Activated CD4-positive, alpha-beta T cell treated with anti-CD3 and anti-CD28 coated beads for 36 hours (primary cell): ENCODE measurements at regions of chr3 and their contacts with region 1.

Region 1: DNA sequence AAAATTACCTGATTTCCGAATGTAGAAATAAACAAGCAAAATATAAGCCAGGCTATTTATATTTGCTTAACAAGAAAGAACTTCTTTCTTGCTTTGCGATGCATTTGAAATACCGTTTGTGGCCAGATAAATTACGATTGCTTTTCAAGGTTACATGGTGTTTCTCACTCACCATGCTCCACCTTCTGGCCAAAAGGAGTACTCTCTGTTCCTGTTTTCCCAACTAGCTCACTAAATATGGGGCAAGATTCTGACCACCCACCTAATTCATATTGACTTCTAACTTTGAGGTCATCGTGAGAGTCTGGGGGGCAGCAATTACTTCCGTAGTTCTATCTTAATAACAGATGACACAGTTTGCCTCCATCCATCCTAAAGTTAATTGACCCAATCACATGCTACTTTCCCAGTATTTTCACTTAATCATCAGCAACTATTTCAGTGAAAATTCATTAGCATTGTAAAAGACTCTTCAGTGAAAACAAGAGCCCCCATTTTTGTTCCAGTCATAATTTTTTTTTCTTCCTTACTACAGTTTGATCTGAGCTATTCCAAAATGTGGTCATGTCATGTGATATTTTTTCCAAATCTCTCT is 25.9 kb downstream of the ACP3 start:
- DNase-seq: peak; percentile 25
- ATAC-seq: no peak
- H3K4me3 Mint-ChIP-seq: no peak overlapping the region
- H3K27ac Mint-ChIP-seq: no peak overlapping the region
- H3K4me1 Mint-ChIP-seq: peaks cover 2% of the 10 kb centered on the region
- H3K27me3 Mint-ChIP-seq: peaks cover 4% of the 10 kb centered on the region

Region 2: GRCh38 chr3:132022914-132023313 is 320.2 kb before region 1 on chr3:
- CTCF ChIA-PET with region 1: no interaction called
- POLR2A ChIA-PET with region 1: no interaction called
- intact Hi-C with region 1: no loop called
- DNase-seq: no peak
- ATAC-seq: no peak
- H3K4me3 Mint-ChIP-seq: no peak overlapping the region
- H3K27ac Mint-ChIP-seq: no peak overlapping the region
- H3K4me1 Mint-ChIP-seq: no peaks in the 10 kb centered on the region
- H3K27me3 Mint-ChIP-seq: peaks cover 14% of the 10 kb centered on the region

Region 3: GRCh38 chr3:132034486-132035464 is 308.3 kb before region 1 on chr3 and contains the start of gene CPNE4:
- CTCF ChIA-PET with region 1: interaction called, 3 read pairs
- POLR2A ChIA-PET with region 1: no interaction called
- intact Hi-C with region 1: loop called in 1 of 2 experiments (anchors 5 kb)
- DNase-seq: peak; percentile 91
- ATAC-seq: peak; percentile 97
- H3K4me3 Mint-ChIP-seq: peak within 1 kb of the TSS; percentile 33
- H3K27ac Mint-ChIP-seq: no peak within 1 kb of the TSS
- H3K4me1 Mint-ChIP-seq: peaks cover 12% of the 10 kb centered on the region
- H3K27me3 Mint-ChIP-seq: peaks cover 62% of the 10 kb centered on the region
- total RNA-seq, gene CPNE4: not detected

Region 4: DNA sequence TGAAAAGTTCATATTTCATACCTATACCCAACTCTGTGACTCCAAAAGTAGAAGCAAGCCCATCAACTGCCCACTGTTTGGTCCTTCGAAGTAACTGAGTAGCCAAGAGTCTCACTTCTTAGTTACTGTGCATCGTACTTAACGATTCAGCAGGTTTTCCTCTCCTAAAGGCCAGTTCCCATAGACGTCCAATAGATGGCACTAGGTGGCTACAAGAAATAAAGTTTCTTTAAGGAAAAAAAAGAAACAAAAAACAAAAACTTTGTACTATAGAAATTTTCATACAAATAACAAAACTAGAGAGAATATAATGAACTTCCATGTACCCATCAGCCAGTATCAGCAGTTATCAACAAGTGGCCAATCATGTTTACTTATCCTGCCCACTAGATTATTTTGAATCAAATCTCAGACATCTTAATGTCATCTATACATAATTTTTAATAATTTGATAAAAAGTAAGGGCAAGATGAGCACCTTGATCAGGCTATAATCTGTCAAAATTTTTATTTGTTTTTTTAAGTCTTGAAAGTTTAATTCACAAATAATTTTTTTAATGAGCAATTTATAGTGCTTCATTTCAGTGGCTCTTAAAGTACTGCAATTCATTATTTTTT is 89.7 kb before region 1 on chr3:
- CTCF ChIA-PET with region 1: interaction called, 17 read pairs
- POLR2A ChIA-PET with region 1: no interaction called
- intact Hi-C with region 1: loop called (anchors 1 kb)
- DNase-seq: peak; percentile 13
- ATAC-seq: peak; percentile 44
- H3K4me3 Mint-ChIP-seq: no peak overlapping the region
- H3K27ac Mint-ChIP-seq: no peak overlapping the region
- H3K4me1 Mint-ChIP-seq: no peaks in the 10 kb centered on the region
- H3K27me3 Mint-ChIP-seq: peaks cover 7% of the 10 kb centered on the region

Region 5: GRCh38 chr3:132332508-132332907 is 10.6 kb before region 1 on chr3:
- CTCF ChIA-PET with region 1: interaction called, 15 read pairs
- POLR2A ChIA-PET with region 1: no interaction called
- intact Hi-C with region 1: no loop called
- DNase-seq: no peak
- ATAC-seq: no peak
- H3K4me3 Mint-ChIP-seq: no peak overlapping the region
- H3K27ac Mint-ChIP-seq: no peak overlapping the region
- H3K4me1 Mint-ChIP-seq: no peaks in the 10 kb centered on the region
- H3K27me3 Mint-ChIP-seq: peaks cover 3% of the 10 kb centered on the region